ENCODE measurements at regions of chr16 and their contacts with region 1.

Region 1: GRCh38 chr16:12803203-12804097 is at the start of gene CPPED1:
- DNase-seq: peak; percentile 83 to 94
- H3K4me3 ChIP-seq: peak within 1 kb of the TSS; percentile 97
- H3K27ac ChIP-seq: peak within 1 kb of the TSS; percentile 99
- H3K4me1 ChIP-seq: peaks cover 39% of the 10 kb centered on the region
- H3K27me3 ChIP-seq: no peaks in the 10 kb centered on the region
- CTCF ChIP-seq: no peak
- total RNA-seq, gene CPPED1: 52.8 and 66.9 TPM in 2 replicates

Region 2: GRCh38 chr16:12455287-12455798 is 348.1 kb before region 1 on chr16:
- CTCF ChIA-PET with region 1: no interaction called
- POLR2A ChIA-PET with region 1: no interaction called
- intact Hi-C with region 1: loop called (anchors 2 kb)
- DNase-seq: peak; percentile 38 to 80
- H3K4me3 ChIP-seq: no peak overlapping the region
- H3K27ac ChIP-seq: no peak overlapping the region
- H3K4me1 ChIP-seq: no peaks in the 10 kb centered on the region
- H3K27me3 ChIP-seq: no peaks in the 10 kb centered on the region
- CTCF ChIP-seq: peak; percentile 95

Region 3: DNA sequence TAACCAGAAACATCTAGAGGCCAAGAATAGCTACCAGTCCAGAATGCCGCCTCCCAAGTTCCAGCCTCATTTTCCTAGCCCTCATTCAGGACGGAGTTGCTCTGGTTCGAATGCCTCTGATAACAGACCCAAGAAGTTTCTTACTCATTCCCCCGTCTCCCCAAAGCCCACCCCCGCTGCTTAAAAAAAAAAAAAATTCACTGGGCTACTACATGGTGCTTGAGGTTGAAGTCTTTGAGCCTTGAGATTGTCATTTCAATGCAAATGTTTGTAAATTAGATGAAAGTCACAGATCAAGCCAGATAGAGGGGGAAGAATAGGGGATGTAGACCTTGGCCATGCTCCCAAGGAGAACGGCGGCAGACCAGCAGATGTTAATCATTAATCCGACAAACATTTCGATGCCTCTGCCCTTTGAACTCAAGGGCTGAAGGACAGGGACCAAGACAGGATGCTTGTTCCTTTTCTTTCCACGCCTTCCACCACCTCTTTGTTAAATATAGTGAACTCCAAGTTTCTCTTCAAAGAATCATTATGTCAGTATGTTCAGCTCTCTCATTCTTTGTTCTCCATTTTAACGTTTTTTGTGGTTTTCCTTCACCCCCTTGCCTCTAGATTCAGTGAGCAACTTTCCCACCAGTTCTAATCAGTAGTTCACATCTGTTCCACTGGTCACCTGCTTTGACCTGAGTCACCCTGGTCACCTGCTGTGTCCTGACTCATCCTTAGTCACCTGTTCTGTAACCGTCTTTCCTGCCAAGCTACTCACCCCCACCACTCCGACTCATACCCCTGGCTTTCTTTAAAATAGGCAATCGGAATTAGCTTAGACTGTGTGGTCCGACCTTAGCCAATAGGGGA is 190.1 kb before region 1 on chr16:
- CTCF ChIA-PET with region 1: no interaction called
- POLR2A ChIA-PET with region 1: interaction called, 4 read pairs
- intact Hi-C with region 1: loop called (anchors 1 kb)
- DNase-seq: peak; percentile 89 to 97
- H3K4me3 ChIP-seq: peak overlapping the region; percentile 46; the same call in 1 of the 2 replicates
- H3K27ac ChIP-seq: peak overlapping the region; percentile 100
- H3K4me1 ChIP-seq: peaks cover 55% of the 10 kb centered on the region
- H3K27me3 ChIP-seq: no peaks in the 10 kb centered on the region
- CTCF ChIP-seq: no peak

Region 4: GRCh38 chr16:12874186-12874585 is 70.7 kb after region 1 on chr16:
- CTCF ChIA-PET with region 1: no interaction called
- POLR2A ChIA-PET with region 1: no interaction called
- intact Hi-C with region 1: loop called (anchors 5 kb)
- DNase-seq: peak; percentile 41 to 93
- H3K4me3 ChIP-seq: peak overlapping the region; percentile 5; the same call in 1 of the 2 replicates
- H3K27ac ChIP-seq: peak overlapping the region; percentile 97
- H3K4me1 ChIP-seq: peaks cover 78% of the 10 kb centered on the region
- H3K27me3 ChIP-seq: no peaks in the 10 kb centered on the region
- CTCF ChIP-seq: no peak

Region 5: DNA sequence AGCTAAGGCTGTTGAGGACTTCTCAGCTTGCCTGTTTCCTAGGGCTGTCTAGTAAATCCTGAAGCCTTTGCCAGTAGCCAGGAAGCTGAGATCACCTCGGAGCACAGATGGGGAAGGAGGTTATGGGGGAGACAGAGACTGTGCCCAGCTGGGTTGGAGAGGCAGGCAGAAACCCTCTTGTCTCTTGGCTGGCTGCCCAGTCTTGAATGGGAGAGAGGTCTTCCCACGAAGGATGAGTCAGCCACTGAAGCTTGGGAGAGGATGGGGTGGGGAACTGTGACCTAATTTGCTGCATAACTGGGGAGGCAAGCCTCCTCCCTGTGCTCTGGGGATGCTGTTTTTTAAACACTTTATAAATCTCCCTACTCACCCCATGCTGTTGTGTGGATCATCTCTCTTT is 167.8 kb after region 1 on chr16:
- CTCF ChIA-PET with region 1: no interaction called
- POLR2A ChIA-PET with region 1: no interaction called
- intact Hi-C with region 1: loop called (anchors 5 kb)
- DNase-seq: peak; percentile 90 to 93
- H3K4me3 ChIP-seq: peak overlapping the region; percentile 13; the same call in 1 of the 2 replicates
- H3K27ac ChIP-seq: peak overlapping the region; percentile 81
- H3K4me1 ChIP-seq: peaks cover 49% of the 10 kb centered on the region
- H3K27me3 ChIP-seq: no peaks in the 10 kb centered on the region
- CTCF ChIP-seq: no peak

Region 6: GRCh38 chr16:13231365-13231764 is 427.9 kb after region 1 on chr16:
- CTCF ChIA-PET with region 1: no interaction called
- POLR2A ChIA-PET with region 1: no interaction called
- intact Hi-C with region 1: loop called (anchors 2 kb)
- DNase-seq: no peak
- H3K4me3 ChIP-seq: no peak overlapping the region
- H3K27ac ChIP-seq: no peak overlapping the region
- H3K4me1 ChIP-seq: no peaks in the 10 kb centered on the region
- H3K27me3 ChIP-seq: no peaks in the 10 kb centered on the region
- CTCF ChIP-seq: no peak

Region 7: GRCh38 chr16:13436641-13437412 is 633.4 kb after region 1 on chr16:
- CTCF ChIA-PET with region 1: no interaction called
- POLR2A ChIA-PET with region 1: no interaction called
- intact Hi-C with region 1: loop called (anchors 5 kb)
- DNase-seq: peak; percentile 58 to 73
- H3K4me3 ChIP-seq: no peak overlapping the region
- H3K27ac ChIP-seq: no peak overlapping the region
- H3K4me1 ChIP-seq: peaks cover 25% of the 10 kb centered on the region
- H3K27me3 ChIP-seq: no peaks in the 10 kb centered on the region
- CTCF ChIP-seq: no peak

Measured in PC-9 (cell line).